ENCODE measurements at regions of chr17 and their contacts with region 1.

Region 1: GRCh38 chr17:78250891-78251794 is 19.7 kb downstream of the TMEM235 start:
- DNase-seq: peak; percentile 80
- H3K4me3 Mint-ChIP-seq: peak overlapping the region; percentile 81
- H3K27ac Mint-ChIP-seq: peak overlapping the region; percentile 74
- H3K4me1 Mint-ChIP-seq: peaks cover 47% of the 10 kb centered on the region
- H3K27me3 Mint-ChIP-seq: no peaks in the 10 kb centered on the region

Region 2: DNA sequence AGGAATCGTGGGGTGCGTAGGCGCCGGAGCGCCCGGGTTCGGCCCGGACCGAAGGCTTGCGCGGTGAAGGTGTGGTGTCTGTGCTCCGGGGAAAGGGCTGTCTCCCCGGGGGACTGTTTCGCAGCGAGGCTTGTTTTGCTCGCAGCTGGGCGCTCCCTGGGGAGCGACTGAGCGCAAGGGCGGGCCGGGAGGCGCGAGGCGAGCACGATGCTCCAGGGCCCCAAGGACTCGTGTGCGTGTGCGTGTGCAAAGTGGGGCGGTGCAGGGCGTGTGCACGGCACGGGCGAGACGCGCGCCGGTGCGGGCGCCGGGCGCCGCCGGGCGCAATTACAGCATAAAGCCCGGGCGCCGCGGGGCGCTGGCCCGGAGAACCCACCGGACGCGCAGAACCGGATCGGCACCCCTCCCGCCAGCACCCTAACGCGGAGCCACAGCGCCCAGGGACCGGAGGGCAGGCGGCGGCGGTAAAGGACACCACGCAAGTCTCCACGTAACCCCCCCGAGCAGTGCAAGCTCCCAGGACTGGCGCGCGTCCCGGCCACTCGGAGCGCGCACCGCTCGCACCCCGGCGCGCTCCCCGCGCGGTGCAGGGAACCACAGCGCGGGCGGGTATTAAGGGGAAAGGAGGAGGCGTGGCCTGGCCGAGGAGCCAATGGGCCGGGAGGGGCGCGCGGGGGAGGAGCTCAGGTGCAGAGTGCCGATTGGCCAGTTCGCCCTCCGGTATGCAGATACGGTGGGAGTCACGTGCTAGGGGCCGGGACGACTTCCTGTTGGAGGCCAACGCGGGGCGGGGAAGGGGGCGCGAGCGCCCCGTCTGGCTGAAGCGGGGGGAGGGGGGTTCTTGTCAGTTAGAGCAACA is 293.1 kb before region 1 on chr17 and contains the start of gene TNRC6C:
- intact Hi-C with region 1: loop called (anchors 5 kb)
- DNase-seq: peak; percentile 99
- H3K4me3 Mint-ChIP-seq: peak within 1 kb of the TSS; percentile 95
- H3K27ac Mint-ChIP-seq: peak within 1 kb of the TSS; percentile 89
- H3K4me1 Mint-ChIP-seq: peaks cover 44% of the 10 kb centered on the region
- H3K27me3 Mint-ChIP-seq: peaks cover 42% of the 10 kb centered on the region
- total RNA-seq, gene TNRC6C: 15.5 and 19.6 TPM in 2 replicates

Region 3: GRCh38 chr17:78082988-78083387 is 168.2 kb before region 1 on chr17:
- intact Hi-C with region 1: loop called (anchors 1 kb)
- DNase-seq: no peak
- H3K4me3 Mint-ChIP-seq: no peak overlapping the region
- H3K27ac Mint-ChIP-seq: no peak overlapping the region
- H3K4me1 Mint-ChIP-seq: peaks cover 5% of the 10 kb centered on the region
- H3K27me3 Mint-ChIP-seq: no peaks in the 10 kb centered on the region

Region 4: DNA sequence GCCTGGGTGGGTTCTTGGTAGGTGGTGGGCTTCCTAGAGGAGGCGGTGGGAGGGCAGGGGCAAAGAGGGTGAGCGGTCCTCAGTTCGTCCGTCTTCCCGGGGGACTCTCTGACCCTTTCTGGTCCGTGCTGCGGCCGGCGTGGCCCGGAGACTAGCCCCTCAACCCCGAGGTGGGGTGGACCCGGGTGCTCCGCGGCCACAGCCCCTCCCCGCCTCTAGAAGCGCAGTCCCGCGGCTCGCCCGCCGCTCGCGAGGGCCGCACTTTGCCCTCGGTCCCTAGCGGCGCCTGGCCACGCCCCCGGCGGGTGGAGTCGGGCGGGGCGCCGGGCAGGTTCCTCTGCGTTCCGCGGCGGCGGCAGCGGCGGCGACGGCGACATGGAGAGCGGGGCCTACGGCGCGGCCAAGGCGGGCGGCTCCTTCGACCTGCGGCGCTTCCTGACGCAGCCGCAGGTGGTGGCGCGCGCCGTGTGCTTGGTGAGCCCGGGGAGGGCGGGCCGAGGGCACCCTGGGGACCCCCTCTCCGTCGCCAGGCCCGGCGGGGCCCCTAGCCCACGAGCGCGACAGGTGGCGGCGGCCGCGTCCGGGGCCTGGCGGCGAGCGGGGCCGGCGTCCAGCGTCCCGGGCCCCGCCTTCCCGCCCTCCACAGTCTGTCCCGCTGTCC is 82.8 kb before region 1 on chr17 and contains the start of gene SYNGR2:
- intact Hi-C with region 1: no loop called
- DNase-seq: peak; percentile 88
- H3K4me3 Mint-ChIP-seq: peak within 1 kb of the TSS; percentile 77
- H3K27ac Mint-ChIP-seq: peak within 1 kb of the TSS; percentile 65
- H3K4me1 Mint-ChIP-seq: peaks cover 28% of the 10 kb centered on the region
- H3K27me3 Mint-ChIP-seq: peaks cover 2% of the 10 kb centered on the region
- total RNA-seq, gene SYNGR2: 131 and 133 TPM in 2 replicates

Region 5: DNA sequence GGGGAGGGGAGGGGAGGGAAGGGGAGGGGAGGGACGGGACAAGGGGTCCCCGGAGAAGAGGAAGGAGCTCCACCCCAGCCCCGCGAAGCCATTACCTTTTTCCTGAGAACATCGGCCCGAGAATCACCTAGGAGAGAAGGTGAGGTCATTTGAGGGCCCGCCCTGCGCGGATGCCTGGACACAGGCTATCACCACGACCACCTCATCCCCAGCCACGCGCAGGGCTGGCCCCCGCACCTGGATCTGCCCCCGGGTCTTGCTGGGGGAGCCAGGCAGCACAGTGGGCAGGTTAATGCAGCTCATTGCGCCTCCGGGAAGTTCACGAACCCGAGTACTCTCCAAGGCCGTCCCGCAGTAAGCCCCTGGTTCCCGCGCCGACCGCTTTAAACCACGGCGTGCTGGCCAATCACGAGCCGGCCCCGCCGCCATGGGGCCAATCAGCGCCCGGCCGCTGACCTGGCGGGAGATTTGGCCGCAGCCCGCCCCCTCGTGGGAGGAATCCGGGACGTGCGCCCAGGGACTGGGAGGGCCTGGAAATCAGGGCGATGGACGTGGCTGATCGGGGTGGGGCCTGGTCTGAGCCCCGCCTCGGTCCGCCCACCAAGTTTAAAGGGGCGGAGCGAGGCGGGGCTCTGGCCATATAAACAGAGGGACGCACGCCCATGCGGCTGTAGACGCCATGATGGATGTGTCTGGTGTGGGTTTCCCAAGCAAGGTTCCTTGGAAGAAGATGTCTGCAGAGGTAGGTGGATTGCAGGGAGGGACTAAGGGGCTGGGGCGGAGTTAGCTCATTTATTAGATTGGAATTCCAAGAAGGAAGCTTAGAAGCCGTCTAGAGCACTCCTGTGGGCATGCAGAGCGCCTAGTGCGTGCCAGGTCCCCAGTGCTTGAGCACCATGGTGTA is 64.2 kb before region 1 on chr17 and contains the starts of genes AFMID and TK1:
- intact Hi-C with region 1: loop called (anchors 2 kb)
- DNase-seq: peak; percentile 87
- H3K4me3 Mint-ChIP-seq: peak within 1 kb of the TSS; percentile 95
- H3K27ac Mint-ChIP-seq: peak within 1 kb of the TSS; percentile 86
- H3K4me1 Mint-ChIP-seq: peaks cover 47% of the 10 kb centered on the region
- H3K27me3 Mint-ChIP-seq: no peaks in the 10 kb centered on the region
- total RNA-seq, gene AFMID: 26.2 and 27.7 TPM in 2 replicates
- total RNA-seq, gene TK1: 65.8 and 66.8 TPM in 2 replicates

Region 6: DNA sequence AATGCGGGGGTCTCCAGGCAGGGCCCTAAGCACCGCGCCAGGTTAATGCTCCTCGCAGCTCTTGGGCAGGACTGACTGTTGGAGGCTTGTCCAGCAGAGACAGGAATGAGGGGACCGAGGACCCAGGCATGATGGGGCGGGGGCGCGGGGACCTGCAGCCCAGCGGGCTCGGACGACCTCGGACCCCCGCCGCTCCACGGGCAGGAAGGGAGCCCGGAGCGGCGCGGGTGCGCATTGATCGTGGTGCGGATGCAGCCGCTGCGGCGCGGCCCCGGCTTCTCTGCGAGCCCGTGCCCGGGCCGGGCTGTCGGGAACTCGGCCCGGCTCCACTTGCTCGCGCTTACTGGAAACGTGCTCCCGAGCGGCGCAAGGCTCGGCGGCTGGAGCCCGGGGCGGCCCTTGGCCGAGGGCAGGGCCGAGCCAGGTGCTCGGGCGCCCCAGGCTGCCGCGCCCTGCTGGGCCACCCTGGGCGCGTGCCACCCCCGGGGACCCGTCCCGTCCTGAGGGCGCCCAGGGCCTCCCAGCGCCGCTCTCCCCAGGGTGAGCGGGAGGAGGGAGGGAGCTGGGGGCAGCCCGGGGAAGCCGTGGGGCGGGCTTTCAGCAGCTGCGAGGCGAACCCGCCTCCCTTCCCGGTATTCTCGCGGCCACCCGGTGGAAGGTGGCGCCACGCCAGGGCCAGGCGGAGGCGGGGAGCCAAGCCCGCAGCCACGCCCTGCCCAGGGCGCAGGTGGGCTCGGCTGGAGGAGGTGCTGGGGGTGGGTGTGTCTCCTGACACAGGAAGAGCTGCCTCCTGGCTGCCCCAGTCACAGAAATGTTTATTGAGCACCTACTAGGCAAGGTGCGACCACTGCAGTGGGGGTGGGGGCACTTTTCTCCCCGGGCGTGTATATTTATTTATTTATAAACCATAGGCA is 62.8 kb after region 1 on chr17:
- intact Hi-C with region 1: loop called (anchors 2 kb)
- DNase-seq: peak; percentile 72
- H3K4me3 Mint-ChIP-seq: peak overlapping the region; percentile 75
- H3K27ac Mint-ChIP-seq: peak overlapping the region; percentile 59
- H3K4me1 Mint-ChIP-seq: peaks cover 44% of the 10 kb centered on the region
- H3K27me3 Mint-ChIP-seq: peaks cover 9% of the 10 kb centered on the region

Region 7: DNA sequence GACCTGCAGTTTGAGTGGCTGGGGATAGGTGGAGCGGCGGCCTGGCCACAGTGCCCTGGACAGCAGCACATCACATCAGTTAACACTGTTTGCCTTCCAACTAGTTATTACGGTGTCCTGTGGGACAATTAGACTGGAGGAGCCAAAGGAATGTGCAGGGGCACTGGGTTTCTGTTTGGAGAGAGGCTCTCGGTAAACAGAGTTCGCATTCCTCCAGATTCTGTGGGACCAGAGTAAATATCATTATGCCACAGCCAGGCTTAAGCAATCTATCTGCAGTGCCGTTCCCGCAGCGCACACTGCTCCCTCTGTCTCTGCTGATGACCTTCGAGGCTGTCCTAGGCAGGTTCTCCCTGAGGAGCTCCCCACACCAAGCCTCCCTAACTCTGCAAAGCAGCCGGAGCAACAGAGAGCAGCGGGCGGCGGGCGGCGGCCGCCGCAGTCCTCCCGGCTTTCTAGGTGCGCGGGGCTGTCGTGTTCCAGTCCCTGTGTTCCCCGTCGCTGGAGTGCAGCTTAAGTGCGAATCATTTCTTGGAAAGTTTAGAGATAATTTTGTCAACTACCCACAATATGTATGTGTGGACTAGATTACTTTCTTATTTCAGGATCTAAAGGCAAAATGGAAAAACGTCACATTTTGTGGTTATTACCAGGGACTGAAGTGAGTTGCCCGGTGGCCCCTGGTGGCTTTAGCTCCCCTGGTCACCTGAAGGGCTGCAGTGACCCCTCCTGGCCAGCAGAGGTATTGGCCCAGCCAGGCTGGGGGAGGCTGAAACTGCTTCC is 170.5 kb after region 1 on chr17:
- intact Hi-C with region 1: loop called (anchors 1 kb)
- DNase-seq: peak; percentile 63
- H3K4me3 Mint-ChIP-seq: peak overlapping the region; percentile 12
- H3K27ac Mint-ChIP-seq: peak overlapping the region; percentile 64
- H3K4me1 Mint-ChIP-seq: peaks cover 52% of the 10 kb centered on the region
- H3K27me3 Mint-ChIP-seq: no peaks in the 10 kb centered on the region

Measured in activated T-helper 1 cell treated with anti-CD3 and anti-CD28 coated beads, Interleukin-12 subunit alpha, Interleukin-12 subunit beta, Interleukin-2, Interleukin-4 antibody, amounts not matched to agents 30 ng/mL and 10 ng/mL and 1 ng/mL, durations not matched to agents 14 hours and 24 hours and 36 hours (primary cell).